ENCODE measurements at regions of chr20 and their contacts with region 1.

Region 1: GRCh38 chr20:51899668-51900067 is 97.3 kb upstream of the SALL4 start:
- DNase-seq: no peak
- H3K4me3 ChIP-seq: no peak overlapping the region
- H3K27ac ChIP-seq: no peak overlapping the region
- H3K4me1 ChIP-seq: no peaks in the 10 kb centered on the region
- H3K27me3 ChIP-seq: no peaks in the 10 kb centered on the region
- CTCF ChIP-seq: no peak

Region 2: GRCh38 chr20:51828467-51829161 is 71.1 kb before region 1 on chr20:
- CTCF ChIA-PET with region 1: no interaction called
- dilution Hi-C with region 1: loop called (anchors 5 kb)
- in situ Hi-C with region 1: no loop called
- intact Hi-C with region 1: no loop called
- DNase-seq: no peak
- H3K4me3 ChIP-seq: no peak overlapping the region
- H3K27ac ChIP-seq: no peak overlapping the region
- H3K4me1 ChIP-seq: no peaks in the 10 kb centered on the region
- H3K27me3 ChIP-seq: no peaks in the 10 kb centered on the region
- CTCF ChIP-seq: no peak

Region 3: GRCh38 chr20:51934301-51935002 is 34.8 kb after region 1 on chr20:
- CTCF ChIA-PET with region 1: no interaction called
- dilution Hi-C with region 1: loop called (anchors 5 kb)
- in situ Hi-C with region 1: no loop called
- intact Hi-C with region 1: no loop called
- DNase-seq: no peak
- H3K4me3 ChIP-seq: no peak overlapping the region
- H3K27ac ChIP-seq: no peak overlapping the region
- H3K4me1 ChIP-seq: no peaks in the 10 kb centered on the region
- H3K27me3 ChIP-seq: no peaks in the 10 kb centered on the region
- CTCF ChIP-seq: no peak

Region 4: GRCh38 chr20:51955756-51956155 is 56.1 kb after region 1 on chr20:
- CTCF ChIA-PET with region 1: no interaction called
- dilution Hi-C with region 1: no loop called
- in situ Hi-C with region 1: no loop called
- intact Hi-C with region 1: no loop called
- DNase-seq: no peak
- H3K4me3 ChIP-seq: no peak overlapping the region
- H3K27ac ChIP-seq: no peak overlapping the region
- H3K4me1 ChIP-seq: no peaks in the 10 kb centered on the region
- H3K27me3 ChIP-seq: no peaks in the 10 kb centered on the region
- CTCF ChIP-seq: no peak

Region 5: GRCh38 chr20:52001999-52002666 is 102.5 kb after region 1 on chr20:
- CTCF ChIA-PET with region 1: no interaction called
- dilution Hi-C with region 1: loop called (anchors 5 kb)
- in situ Hi-C with region 1: no loop called
- intact Hi-C with region 1: no loop called
- DNase-seq: no peak
- H3K4me3 ChIP-seq: no peak overlapping the region
- H3K27ac ChIP-seq: no peak overlapping the region
- H3K4me1 ChIP-seq: no peaks in the 10 kb centered on the region
- H3K27me3 ChIP-seq: no peaks in the 10 kb centered on the region
- CTCF ChIP-seq: no peak